Posterior cingulate gyrus (tissue), 11 donors: ENCODE measurements at regions of chr10 and their contacts with region 1.

Region 1: GRCh38 chr10:22251751-22252223 is 34.0 kb upstream of the EBLN1 start:
- DNase-seq: peak; percentile 43 to 94 (median 68)

Region 2: DNA sequence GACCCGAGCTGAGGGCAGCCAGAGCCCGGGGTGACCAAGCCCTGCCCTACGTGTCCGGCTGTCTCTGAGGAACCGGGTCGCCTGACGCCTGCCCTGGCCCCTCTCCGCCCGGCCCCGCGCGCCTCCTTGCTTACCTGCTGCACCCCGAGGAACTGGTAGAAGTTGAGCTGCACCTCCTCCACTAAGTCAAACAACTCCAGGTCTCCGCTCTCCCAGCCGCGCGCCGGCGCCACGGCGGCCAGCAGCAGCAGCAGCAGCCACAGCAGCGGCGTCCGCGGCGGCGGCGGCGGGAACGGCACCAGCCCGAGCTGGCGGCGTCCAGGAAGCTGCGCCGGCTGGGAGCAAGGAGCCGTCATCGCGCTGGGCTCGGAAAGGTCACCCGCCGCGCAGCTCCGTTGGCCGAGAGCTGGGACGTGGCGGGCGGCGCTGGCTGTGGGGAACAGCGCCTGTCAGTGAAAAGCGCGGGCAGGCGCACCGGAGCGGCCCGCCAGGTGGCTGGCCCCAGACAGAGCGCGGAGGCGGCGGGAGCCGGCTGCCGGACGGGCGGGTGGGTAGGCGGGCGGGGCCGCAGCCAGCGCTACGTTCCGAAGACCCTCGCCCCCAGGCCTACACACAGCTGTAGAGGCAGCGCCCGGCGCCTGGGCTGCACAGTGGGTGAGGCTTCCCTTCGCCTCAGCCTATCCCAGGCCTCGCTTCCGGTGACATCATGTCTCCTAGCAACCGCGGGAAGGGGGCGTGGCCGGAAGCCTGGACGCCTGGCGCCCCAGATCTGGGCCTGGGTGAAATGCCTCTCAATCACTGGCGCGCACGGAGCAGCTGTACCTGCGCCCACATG is 248.5 kb before region 1 on chr10 and contains the start of gene DNAJC1:
- intact Hi-C with region 1: loop called (anchors 10 kb)
- DNase-seq: peak; percentile 97 to 100 (median 98)

Region 3: GRCh38 chr10:22228943-22229801 is 22.6 kb before region 1 on chr10:
- intact Hi-C with region 1: loop called (anchors 2 kb)
- DNase-seq: peak; percentile 79 to 97 (median 82)

Region 4: GRCh38 chr10:22316285-22317120 is 64.7 kb after region 1 on chr10 and contains the start of gene COMMD3:
- intact Hi-C with region 1: loop called (anchors 2 kb)
- DNase-seq: peak; percentile 79 to 97 (median 86)

Region 5: DNA sequence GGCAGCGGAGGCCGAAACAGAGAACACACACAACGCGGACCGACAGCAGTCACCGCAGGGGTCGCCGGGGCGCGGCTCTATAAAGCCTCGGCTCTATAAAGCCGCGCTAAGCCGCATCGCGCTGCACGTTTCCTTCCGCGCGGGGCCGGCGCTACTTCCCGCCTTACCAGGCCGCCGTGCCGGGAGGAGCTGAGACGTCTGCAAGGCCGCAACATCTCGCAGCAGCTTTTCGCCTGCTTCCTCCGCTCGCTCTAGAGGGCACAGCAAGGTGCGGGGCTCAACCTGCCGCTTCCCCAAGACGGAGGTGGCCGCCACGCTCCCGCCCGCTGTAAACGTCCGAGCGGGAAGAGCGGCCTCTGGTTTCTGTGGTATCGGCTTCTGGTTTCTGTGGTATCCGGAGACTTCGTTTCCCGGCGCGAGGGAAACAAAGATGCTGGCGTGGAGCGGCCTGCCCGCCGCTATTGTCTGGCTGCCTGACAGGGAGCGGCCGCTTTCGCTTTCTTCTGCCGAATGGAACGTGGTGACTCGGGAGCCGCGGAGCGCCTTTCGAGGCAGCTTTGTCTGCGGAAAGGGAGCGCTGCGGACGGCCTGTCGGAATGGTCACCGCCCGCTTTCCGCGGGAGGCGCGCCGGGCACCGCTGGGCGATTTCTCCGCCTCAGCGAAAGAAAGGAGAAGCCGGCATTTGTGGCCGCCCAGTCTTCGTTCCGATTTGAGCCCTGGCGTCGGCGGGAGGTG is 185.3 kb after region 1 on chr10:
- intact Hi-C with region 1: loop called (anchors 10 kb)
- DNase-seq: peak; percentile 66 to 98 (median 86)

Region 6: DNA sequence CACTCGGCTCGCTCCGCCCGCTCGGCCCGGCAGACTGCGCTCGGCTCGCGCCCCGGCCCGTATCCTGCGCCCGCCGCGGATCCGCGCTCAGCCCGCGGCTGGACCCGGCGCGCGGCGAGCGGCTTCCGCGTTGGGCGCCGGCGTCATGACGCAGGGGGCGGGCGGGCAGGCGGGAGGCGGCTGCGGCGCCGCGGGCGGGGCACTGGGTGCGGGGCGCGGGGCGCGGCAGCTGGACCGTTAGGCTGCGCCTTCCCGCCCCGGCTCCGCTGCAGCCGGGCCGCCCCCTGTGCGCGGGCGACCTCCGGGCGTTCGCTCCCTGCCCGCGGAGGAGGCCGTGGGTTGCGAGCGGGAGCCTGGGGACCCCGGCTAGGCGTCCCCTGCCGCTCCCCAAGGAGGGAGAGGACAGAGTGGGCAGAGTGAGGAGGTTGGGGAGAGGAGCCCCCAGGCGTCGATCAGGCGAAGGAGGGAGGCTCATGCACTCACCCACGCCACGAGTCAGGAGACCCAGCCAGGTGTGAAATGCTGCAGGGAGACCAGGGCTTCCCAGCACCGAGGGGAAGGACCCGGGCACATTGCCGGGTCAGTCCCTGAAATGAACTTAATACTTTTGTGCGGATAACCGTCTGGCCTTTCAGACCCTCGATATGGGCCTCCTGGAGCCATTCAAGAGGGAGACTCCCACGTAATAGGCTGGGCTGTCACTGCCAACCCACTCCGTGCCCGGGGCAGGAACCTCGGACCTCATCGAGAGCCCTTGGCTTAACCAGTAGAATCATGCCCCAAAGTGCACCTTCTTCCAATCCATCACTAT is 462.9 kb after region 1 on chr10 and contains the start of gene PIP4K2A:
- intact Hi-C with region 1: loop called (anchors 10 kb)
- DNase-seq: peak; percentile 61 to 96 (median 71)